Tibial artery (tissue), 4 donors: ENCODE measurements at regions of chr1 and their contacts with region 1.

Region 1: GRCh38 chr1:32939655-32940371 is 24.8 kb downstream of the RNF19B start:
- DNase-seq: peak in 1 of 2 donors; percentile 48
- H3K4me3 ChIP-seq: no peak overlapping the region
- H3K27ac ChIP-seq: no peak overlapping the region
- H3K4me1 ChIP-seq: peaks cover 0 to 9% (median 3%) of the 10 kb centered on the region in 4 donors
- H3K27me3 ChIP-seq: no peaks in the 10 kb centered on the region
- CTCF ChIP-seq: no peak

Region 2: GRCh38 chr1:32925403-32926162 is 14.2 kb before region 1 on chr1:
- intact Hi-C with region 1: no loop called
- DNase-seq: no peak
- H3K4me3 ChIP-seq: no peak overlapping the region
- H3K27ac ChIP-seq: no peak overlapping the region
- H3K4me1 ChIP-seq: peaks cover 0 to 18% (median 9%) of the 10 kb centered on the region in 4 donors
- H3K27me3 ChIP-seq: peaks cover 0 to 22% of the 10 kb centered on the region in 2 donors
- CTCF ChIP-seq: no peak

Region 3: DNA sequence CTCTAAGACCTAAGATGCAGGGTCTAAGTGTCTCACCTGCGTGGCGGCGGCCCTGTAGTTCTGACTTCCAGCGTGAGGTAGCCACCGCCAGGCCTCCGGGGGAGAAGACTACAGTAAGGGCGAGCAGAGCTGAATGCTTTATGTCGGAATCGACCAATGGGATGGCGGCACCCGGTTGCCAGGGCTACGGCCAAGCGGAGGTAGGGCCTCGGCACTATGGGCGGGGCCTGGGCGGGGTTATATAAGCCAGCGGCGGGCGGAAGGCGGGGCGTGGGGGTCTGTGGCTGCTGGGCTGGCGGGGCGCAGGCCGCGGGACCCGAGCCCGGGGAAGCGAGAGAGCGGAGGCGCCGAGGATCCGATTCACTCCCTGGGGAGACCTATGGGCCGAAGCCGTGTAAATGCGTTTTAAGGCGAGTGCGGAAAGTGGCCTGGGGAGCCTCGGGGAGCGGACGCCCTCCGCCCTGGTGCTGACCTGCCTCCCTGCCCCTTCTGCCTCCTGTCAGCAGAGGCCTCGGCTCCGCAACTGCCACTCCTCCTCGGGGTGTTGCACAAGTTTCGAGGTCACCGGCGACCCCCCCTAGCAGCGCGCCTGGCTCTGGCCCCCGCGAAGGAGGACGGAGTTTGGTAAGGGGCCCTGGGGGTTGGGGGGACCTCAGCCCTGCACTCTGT is 141.2 kb after region 1 on chr1 and contains the start of gene AZIN2:
- intact Hi-C with region 1: loop called (anchors 10 kb)
- DNase-seq: peak; percentile 96 to 97
- H3K4me3 ChIP-seq: peak within 1 kb of the TSS; percentile 65 to 85
- H3K27ac ChIP-seq: peak within 1 kb of the TSS; percentile 55 to 56
- H3K4me1 ChIP-seq: peaks cover 0 to 25% (median 19%) of the 10 kb centered on the region in 4 donors
- H3K27me3 ChIP-seq: no peaks in the 10 kb centered on the region
- CTCF ChIP-seq: no peak